Aorta (tissue), 5 donors: ENCODE measurements at regions of chr1 and their contacts with region 1.

Region 1: DNA sequence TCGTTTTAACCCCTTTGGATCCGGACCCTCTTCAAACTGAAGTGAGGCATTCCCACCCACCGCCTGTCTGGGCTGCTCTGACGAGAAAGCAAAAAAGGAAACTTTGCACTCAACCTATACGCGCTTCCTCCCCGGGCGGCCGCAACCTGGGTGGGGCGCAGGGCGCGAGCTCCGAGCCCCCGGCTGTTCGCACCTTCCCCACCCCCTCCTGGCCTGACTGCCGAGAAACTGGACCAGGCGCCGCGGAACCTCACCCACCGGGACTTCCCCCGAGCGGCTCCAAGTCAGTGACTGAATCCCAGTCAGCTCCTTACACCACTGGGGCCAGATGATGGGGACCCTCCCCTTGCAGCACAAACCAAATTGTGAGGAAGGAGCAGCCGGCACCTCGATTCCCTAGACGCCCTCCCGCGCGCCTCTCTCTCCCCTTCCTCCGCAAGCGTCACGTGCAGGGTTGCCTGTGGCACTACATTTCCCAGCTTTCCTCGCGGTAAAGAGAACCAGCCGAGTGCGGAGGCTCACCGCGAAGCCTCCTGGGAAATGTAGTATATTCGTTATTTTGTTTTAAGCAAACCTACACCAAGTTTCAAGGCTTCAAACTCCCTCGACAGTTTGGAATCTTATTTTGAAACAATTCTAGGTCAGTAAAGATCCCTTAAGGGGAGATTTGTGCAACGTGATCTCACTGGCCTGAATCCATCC is at the start of gene RAB29:
- DNase-seq: peak; percentile 90 to 93
- ATAC-seq: peak; percentile 95
- H3K4me3 ChIP-seq: peak within 1 kb of the TSS; percentile 51 to 76
- H3K27ac ChIP-seq: peak within 1 kb of the TSS; percentile 37 to 64
- H3K4me1 ChIP-seq: no peaks in the 10 kb centered on the region
- H3K27me3 ChIP-seq: no peaks in the 10 kb centered on the region
- total RNA-seq, gene RAB29: 19.5 to 38.9 TPM

Region 2: GRCh38 chr1:205750138-205751035 is 24.8 kb before region 1 on chr1 and contains the start of gene NUCKS1:
- intact Hi-C with region 1: loop called in 1 of 2 experiments (anchors 1 kb)
- DNase-seq: peak; percentile 98 to 99
- ATAC-seq: peak; percentile 94
- H3K4me3 ChIP-seq: peak within 1 kb of the TSS; percentile 96 to 98
- H3K27ac ChIP-seq: peak within 1 kb of the TSS; percentile 74 to 81
- H3K4me1 ChIP-seq: peaks cover 0 to 4% of the 10 kb centered on the region in 2 donors
- H3K27me3 ChIP-seq: no peaks in the 10 kb centered on the region
- total RNA-seq, gene NUCKS1: 145 to 158 TPM